ENCODE measurements at regions of chr1 and their contacts with region 1.

Region 1: GRCh38 chr1:54950369-54951163 is 29.9 kb upstream of the TMEM61 start:
- DNase-seq: peak; percentile 72 to 84 (median 80)
- ATAC-seq: peak; percentile 87
- H3K4me3 ChIP-seq: no peak overlapping the region
- H3K27ac ChIP-seq: peak overlapping the region; percentile 65
- H3K4me1 ChIP-seq: peaks cover 3% of the 10 kb centered on the region
- H3K27me3 ChIP-seq: no peaks in the 10 kb centered on the region

Region 2: DNA sequence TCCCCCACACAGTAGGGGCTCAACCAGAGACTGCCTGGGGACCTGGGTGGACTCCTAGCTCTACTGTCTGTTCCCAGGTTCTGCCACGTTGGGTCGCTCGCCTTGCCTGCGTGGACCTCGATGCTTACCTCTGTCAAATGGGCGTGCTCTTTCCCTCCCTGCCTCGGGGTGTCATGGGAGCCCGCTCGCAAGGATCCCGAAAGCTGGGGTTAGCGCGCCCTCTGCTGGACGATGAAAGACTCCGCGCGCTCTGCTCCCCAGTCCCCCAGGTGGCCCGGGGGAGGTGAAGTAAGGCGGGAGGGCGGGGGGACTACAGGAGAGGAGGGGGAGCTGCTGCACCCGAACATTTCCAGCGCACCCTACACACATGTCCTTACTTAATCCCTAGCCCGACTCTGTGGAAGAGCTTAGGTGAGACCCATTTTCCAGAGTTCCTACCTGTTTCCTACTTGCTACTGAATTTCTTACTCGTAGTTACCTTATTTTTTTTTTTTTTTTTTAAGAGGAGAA is 45.8 kb after region 1 on chr1:
- intact Hi-C with region 1: loop called (anchors 2 to 5 kb)
- DNase-seq: peak; percentile 76 to 89 (median 83)
- ATAC-seq: peak; percentile 73 to 85
- H3K4me3 ChIP-seq: no peak overlapping the region
- H3K27ac ChIP-seq: no peak overlapping the region
- H3K4me1 ChIP-seq: no peaks in the 10 kb centered on the region
- H3K27me3 ChIP-seq: no peaks in the 10 kb centered on the region

Region 3: DNA sequence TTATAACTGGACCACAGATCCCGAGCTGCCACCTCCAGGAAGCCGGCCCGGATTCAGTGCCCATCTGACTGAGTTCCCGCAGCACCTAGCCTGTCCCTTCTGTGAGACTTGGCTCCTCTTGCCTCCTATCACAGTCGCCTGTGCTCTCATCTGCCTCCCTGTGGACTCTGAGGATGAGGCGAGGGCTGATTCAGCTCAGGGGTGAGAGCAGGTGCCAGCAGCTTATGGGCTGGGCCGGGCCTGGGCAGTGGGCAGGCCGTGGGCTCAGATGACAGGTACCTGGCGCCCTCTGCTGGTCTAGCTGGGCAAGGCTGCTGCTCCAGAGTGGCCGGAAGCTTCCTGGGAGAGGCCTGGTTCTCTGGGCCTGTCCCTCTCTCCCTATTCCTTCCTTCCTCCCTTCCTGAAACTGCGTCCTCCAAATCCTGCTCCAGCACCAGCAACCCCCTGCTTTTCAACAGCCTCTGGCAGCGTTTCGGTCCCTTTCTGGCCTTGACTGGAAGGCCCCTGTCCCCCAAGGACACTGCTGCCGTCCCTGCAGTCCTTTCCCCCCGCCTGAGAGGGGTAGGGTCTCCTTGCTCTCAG is 71.5 kb after region 1 on chr1:
- intact Hi-C with region 1: loop called in 1 of 4 experiments (anchors 5 kb)
- DNase-seq: peak; percentile 78 to 90 (median 88)
- ATAC-seq: peak; percentile 97 to 98
- H3K4me3 ChIP-seq: no peak overlapping the region
- H3K27ac ChIP-seq: no peak overlapping the region
- H3K4me1 ChIP-seq: no peaks in the 10 kb centered on the region
- H3K27me3 ChIP-seq: no peaks in the 10 kb centered on the region